Endothelial cell of umbilical vein (primary cell): ENCODE measurements at regions of chr3 and their contacts with region 1.

Region 1: GRCh38 chr3:182063742-182064141 is 352.0 kb downstream of the SOX2 start:
- DNase-seq: no peak
- H3K4me3 ChIP-seq: no peak overlapping the region
- H3K27ac ChIP-seq: no peak overlapping the region
- H3K4me1 ChIP-seq: no peaks in the 10 kb centered on the region
- H3K27me3 ChIP-seq: no peaks in the 10 kb centered on the region
- CTCF ChIP-seq: no peak
- POLR2A ChIP-seq: no peak

Region 2: DNA sequence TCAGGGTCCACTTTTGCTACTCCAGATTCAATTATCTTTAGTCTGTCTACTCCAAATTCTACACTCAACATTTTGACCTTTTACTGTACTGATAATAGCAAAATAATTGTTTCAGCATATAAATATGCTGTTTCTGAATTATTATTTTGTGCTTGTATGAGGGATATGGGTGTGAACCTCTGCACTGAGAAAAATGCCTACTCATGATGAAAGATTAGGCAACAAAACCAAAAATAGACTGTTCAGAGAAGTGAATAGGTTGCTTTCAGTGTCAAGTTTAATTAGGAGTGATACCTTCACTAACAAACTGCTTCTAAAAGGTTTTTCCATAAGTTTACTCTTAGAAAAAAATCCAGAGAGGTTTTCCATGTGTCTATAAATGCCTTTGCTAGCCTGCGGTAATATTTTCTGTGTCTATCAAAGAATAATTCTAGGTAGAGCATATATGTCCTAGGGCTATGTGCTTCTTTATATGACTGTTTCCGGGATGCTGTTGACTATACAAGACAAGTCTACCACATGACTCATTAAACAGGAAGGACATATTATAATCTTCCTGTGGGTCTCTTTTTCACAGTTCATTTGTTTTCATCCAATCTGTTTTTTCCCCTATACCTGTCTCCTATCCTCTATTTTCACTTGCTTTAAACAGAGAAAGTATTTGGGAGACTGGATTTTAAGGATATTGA is 1680.3 kb before region 1 on chr3:
- CTCF ChIA-PET with region 1: no interaction called
- POLR2A ChIA-PET with region 1: no interaction called
- dilution Hi-C with region 1: no loop called
- intact Hi-C with region 1: loop called (anchors 5 kb)
- DNase-seq: no peak
- H3K4me3 ChIP-seq: no peak overlapping the region
- H3K27ac ChIP-seq: no peak overlapping the region
- H3K4me1 ChIP-seq: no peaks in the 10 kb centered on the region
- H3K27me3 ChIP-seq: no peaks in the 10 kb centered on the region
- CTCF ChIP-seq: no peak
- POLR2A ChIP-seq: no peak

Region 3: DNA sequence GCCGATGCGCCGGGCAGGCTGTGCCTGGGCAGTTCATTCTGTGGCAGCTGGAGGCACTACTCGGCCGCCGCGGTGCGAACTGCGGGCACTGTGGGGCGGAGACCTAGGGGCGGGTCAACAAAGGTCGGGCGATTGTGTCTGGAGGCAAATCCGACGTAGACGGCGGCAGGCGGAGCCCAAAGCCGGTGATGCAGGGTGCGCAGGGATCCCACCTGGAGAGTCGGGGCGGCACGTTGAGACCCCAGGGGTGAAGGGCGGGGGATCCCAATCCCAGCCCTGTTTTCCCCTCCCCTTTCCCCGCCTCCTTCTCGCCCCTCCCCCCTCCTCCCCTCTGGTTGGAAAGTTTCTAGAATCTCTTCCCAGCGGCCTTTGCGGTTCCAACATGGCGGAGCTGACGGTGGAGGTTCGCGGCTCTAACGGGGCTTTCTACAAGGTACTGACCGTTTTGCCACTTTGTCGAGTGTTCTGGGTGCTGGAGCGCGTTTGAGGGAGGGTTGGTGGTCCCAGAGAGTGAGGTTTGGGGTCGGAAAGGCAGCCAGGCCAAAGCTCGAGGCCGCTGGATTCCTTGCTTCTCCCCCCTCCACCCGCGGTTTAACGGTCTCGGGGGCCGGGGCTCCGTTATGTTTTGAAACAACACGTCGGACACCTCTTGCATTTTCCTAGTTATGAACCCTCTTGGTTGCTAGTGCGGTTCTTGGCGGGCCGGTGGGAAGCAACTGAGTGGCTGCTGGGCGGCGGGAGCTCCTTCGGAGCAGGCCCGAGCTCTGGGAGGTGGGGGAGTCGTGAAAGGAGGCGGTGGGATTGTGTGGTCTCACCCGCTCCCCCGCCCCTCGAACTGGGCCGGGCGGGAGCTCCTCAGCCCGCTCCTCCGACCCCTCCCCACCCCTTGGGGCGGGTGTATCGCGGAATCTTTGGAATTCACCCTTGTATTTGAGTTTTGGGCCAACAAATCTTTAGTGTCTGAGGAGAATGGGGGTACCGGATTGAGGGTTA is 1151.1 kb before region 1 on chr3 and contains the start of gene FXR1:
- CTCF ChIA-PET with region 1: no interaction called
- POLR2A ChIA-PET with region 1: no interaction called
- dilution Hi-C with region 1: no loop called
- intact Hi-C with region 1: no loop called
- DNase-seq: peak; percentile 83
- H3K4me3 ChIP-seq: peak within 1 kb of the TSS; percentile 81 to 98 (median 90)
- H3K27ac ChIP-seq: peak within 1 kb of the TSS; percentile 92
- H3K4me1 ChIP-seq: peaks cover 16% of the 10 kb centered on the region
- H3K27me3 ChIP-seq: no peaks in the 10 kb centered on the region
- CTCF ChIP-seq: peak; percentile 67 to 83
- POLR2A ChIP-seq: peak; percentile 87
- total RNA-seq, gene FXR1: 183 and 186 TPM in 2 replicates

Region 4: GRCh38 chr3:181782301-181782954 is 281.3 kb before region 1 on chr3:
- CTCF ChIA-PET with region 1: no interaction called
- POLR2A ChIA-PET with region 1: no interaction called
- dilution Hi-C with region 1: no loop called
- intact Hi-C with region 1: no loop called
- DNase-seq: peak; percentile 58
- H3K4me3 ChIP-seq: peak overlapping the region in 1 of 3 experiments; percentile 22
- H3K27ac ChIP-seq: peak overlapping the region; percentile 67
- H3K4me1 ChIP-seq: peaks cover 10% of the 10 kb centered on the region
- H3K27me3 ChIP-seq: no peaks in the 10 kb centered on the region
- CTCF ChIP-seq: no peak
- POLR2A ChIP-seq: no peak